ENCODE measurements at regions of chr20 and their contacts with region 1.

Region 1: DNA sequence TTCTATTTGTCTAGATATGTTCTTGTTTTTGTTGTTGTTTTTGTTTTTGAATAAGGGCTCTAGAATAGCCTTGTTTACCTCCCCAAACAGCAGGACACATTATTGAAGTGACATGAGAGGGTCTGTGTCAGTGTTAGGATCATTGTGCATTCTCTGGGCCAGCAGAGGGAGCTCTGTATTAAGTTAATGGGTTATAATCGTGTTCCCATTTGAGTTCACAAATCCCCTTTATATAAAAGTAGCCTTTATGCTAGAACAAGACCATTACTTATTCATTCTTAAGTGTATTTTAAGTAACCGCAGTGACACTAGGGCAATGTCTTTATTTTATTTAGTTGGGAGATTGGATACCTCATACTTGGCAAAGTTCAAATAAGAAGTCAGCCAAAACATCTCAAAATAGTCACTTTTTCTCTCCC is 44.8 kb downstream of the STK4 start:
- DNase-seq: peak; percentile 65
- ATAC-seq: peak; percentile 71
- H3K4me3 Mint-ChIP-seq: no peak overlapping the region
- H3K27ac Mint-ChIP-seq: no peak overlapping the region
- H3K4me1 Mint-ChIP-seq: peaks cover 16% of the 10 kb centered on the region
- H3K27me3 Mint-ChIP-seq: no peaks in the 10 kb centered on the region

Region 2: GRCh38 chr20:44733341-44734069 is 277.6 kb before region 1 on chr20:
- CTCF ChIA-PET with region 1: no interaction called
- POLR2A ChIA-PET with region 1: no interaction called
- DNase-seq: peak; percentile 75
- ATAC-seq: peak; percentile 83
- H3K4me3 Mint-ChIP-seq: no peak overlapping the region
- H3K27ac Mint-ChIP-seq: no peak overlapping the region
- H3K4me1 Mint-ChIP-seq: peaks cover 18% of the 10 kb centered on the region
- H3K27me3 Mint-ChIP-seq: no peaks in the 10 kb centered on the region

Region 3: GRCh38 chr20:44942264-44942973 is 68.7 kb before region 1 on chr20:
- CTCF ChIA-PET with region 1: no interaction called
- POLR2A ChIA-PET with region 1: no interaction called
- DNase-seq: no peak
- ATAC-seq: no peak
- H3K4me3 Mint-ChIP-seq: no peak overlapping the region
- H3K27ac Mint-ChIP-seq: no peak overlapping the region
- H3K4me1 Mint-ChIP-seq: peaks cover 1% of the 10 kb centered on the region
- H3K27me3 Mint-ChIP-seq: no peaks in the 10 kb centered on the region

Region 4: GRCh38 chr20:44997171-44998067 is 13.7 kb before region 1 on chr20:
- CTCF ChIA-PET with region 1: interaction called, 31 read pairs
- POLR2A ChIA-PET with region 1: interaction called, 4 read pairs
- DNase-seq: no peak
- ATAC-seq: no peak
- H3K4me3 Mint-ChIP-seq: no peak overlapping the region
- H3K27ac Mint-ChIP-seq: peak overlapping the region; percentile 53
- H3K4me1 Mint-ChIP-seq: peaks cover 28% of the 10 kb centered on the region
- H3K27me3 Mint-ChIP-seq: no peaks in the 10 kb centered on the region

Region 5: GRCh38 chr20:45036044-45036755 is 25.1 kb after region 1 on chr20:
- CTCF ChIA-PET with region 1: interaction called, 25 read pairs
- POLR2A ChIA-PET with region 1: no interaction called
- DNase-seq: no peak
- ATAC-seq: peak; percentile 19
- H3K4me3 Mint-ChIP-seq: no peak overlapping the region
- H3K27ac Mint-ChIP-seq: no peak overlapping the region
- H3K4me1 Mint-ChIP-seq: peaks cover 54% of the 10 kb centered on the region
- H3K27me3 Mint-ChIP-seq: no peaks in the 10 kb centered on the region

Region 6: DNA sequence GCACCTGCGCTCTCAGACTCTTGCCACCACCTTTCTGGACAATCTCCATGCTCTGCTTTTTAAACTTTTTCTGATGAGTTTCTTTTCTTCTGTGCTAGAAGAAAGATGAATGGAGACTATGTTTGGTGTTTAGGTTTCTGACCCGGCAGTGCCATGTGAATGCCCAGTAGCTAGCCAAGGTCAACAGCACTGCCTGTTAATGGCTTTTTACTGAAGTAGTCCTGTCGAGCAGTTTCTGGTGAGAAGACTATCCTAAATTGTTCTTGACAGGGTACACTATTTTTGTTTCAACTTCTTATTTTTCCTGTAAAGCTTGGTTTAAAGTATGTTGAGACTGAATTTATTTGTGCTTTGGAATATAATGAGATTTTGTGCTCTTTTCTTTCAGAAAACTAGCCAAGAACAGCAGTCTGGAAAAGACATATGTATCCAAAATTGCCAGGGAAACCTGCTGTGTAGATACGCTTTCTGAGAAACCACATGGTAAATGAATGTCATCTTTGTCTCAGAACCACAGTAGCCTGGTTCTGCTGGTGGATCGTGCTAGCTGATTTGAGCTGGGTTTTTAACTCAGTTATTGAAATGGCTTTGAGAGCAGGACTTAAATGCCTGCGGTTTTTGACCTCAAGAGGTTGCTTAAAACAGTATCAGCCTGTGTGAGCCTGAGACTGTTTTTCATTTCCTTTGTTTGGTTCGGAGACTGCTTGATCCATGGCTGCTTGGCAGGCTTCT is 41.7 kb after region 1 on chr20:
- CTCF ChIA-PET with region 1: interaction called, 10 read pairs
- POLR2A ChIA-PET with region 1: no interaction called
- DNase-seq: peak; percentile 54
- ATAC-seq: peak; percentile 80
- H3K4me3 Mint-ChIP-seq: peak overlapping the region; percentile 27
- H3K27ac Mint-ChIP-seq: peak overlapping the region; percentile 53
- H3K4me1 Mint-ChIP-seq: peaks cover 78% of the 10 kb centered on the region
- H3K27me3 Mint-ChIP-seq: no peaks in the 10 kb centered on the region

Region 7: DNA sequence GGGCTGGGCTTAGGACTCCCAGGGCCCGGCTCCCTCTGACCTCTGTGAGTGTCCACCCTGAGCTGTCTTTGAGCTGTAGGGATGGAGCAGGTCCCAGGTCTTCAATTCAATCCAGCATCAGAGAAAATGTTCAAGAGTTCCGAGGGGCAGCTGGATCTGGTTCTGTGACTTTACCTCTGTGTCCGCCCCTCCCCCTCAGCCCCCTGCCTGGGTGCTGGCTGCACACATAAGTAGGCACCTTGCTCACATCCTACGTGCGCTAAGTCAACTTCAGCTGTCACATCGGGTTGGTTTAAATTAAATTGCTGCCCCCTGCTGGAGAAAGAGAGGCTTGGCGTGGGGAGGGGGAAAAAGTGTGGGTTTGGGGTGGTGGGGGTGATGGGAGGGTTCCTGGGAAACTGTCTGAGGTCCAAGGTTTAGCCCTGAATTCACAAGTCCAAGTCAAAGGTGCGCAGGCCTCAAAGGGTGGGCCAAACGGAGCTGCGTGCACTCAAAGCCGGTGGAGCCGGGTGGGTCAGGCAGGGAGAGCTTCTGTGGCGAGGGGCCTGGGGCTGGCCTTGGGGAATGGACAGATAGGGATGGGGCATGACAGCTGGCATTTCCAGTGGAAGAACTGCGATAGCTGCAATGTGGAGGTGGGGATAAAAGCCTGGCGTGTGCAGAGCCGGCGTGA is 100.8 kb after region 1 on chr20:
- CTCF ChIA-PET with region 1: interaction called, 12 read pairs
- POLR2A ChIA-PET with region 1: no interaction called
- DNase-seq: no peak
- ATAC-seq: no peak
- H3K4me3 Mint-ChIP-seq: no peak overlapping the region
- H3K27ac Mint-ChIP-seq: no peak overlapping the region
- H3K4me1 Mint-ChIP-seq: peaks cover 5% of the 10 kb centered on the region
- H3K27me3 Mint-ChIP-seq: peaks cover 12% of the 10 kb centered on the region